MCF 10A (cell line): ENCODE measurements at regions of chr6 and their contacts with region 1.

Region 1: GRCh38 chr6:167832497-167833395 is 6.0 kb downstream of the AFDN start:
- DNase-seq: no peak
- H3K4me3 Mint-ChIP-seq: peak overlapping the region; percentile 43
- H3K27ac Mint-ChIP-seq: peak overlapping the region; percentile 42
- H3K4me1 Mint-ChIP-seq: peaks cover 34% of the 10 kb centered on the region
- H3K27me3 Mint-ChIP-seq: no peaks in the 10 kb centered on the region
- CTCF ChIP-seq: no peak

Region 2: DNA sequence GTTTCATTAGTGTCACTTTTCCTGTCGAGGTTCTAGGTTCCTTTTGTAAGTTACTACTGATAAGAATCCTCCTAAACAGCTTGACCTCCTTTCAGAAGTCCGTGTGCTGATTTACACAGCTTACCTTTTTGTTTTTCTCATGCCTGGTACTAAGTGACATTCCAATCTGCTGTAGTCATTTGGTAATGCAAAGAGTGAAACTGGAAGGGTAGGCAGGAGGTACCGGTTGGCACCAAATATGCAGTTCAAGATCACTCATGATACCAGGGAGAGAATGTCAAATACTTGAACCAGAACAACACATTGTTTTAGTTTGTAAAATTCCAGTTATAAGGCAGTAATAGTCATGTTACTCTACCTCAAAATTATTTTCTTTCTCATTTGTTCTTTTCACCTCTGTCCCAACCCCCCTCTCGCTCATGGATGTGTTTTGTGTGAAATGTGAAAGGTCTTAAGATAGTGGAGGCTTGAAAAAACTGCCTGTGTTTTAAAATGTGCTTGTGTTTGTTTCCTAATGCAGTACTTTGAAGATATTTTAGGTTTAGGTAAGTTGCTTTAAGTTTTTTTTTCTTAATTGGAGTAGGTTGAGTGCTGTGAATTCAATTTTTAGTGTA is 17.2 kb after region 1 on chr6:
- CTCF ChIA-PET with region 1: interaction called, 6 read pairs
- POLR2A ChIA-PET with region 1: interaction called, 249 read pairs
- intact Hi-C with region 1: no loop called
- DNase-seq: peak; percentile 91
- H3K4me3 Mint-ChIP-seq: peak overlapping the region; percentile 65
- H3K27ac Mint-ChIP-seq: peak overlapping the region; percentile 90
- H3K4me1 Mint-ChIP-seq: peaks cover 45% of the 10 kb centered on the region
- H3K27me3 Mint-ChIP-seq: no peaks in the 10 kb centered on the region
- CTCF ChIP-seq: no peak